SK-N-SH (cell line): ENCODE measurements at regions of chr17 and their contacts with region 1.

Region 1: GRCh38 chr17:82418001-82418986 is at the starts of genes HEXD and OGFOD3:
- DNase-seq: peak; percentile 100
- H3K4me3 ChIP-seq: peak within 1 kb of the TSS; percentile 71 to 94
- H3K27ac ChIP-seq: peak within 1 kb of the TSS; percentile 45 to 90; a peak in 3 of 4 replicates
- H3K4me1 ChIP-seq: peaks cover 0 to 3% of the 10 kb centered on the region in 2 experiments; a peak in 2 of 4 replicates
- H3K27me3 ChIP-seq: no peaks in the 10 kb centered on the region
- CTCF ChIP-seq: no peak
- EP300 ChIP-seq: no peak; a peak in 1 of 4 replicates
- RAD21 ChIP-seq: no peak
- polyA plus RNA-seq, gene HEXD: 38.8 and 43.1 TPM in 2 replicates
- polyA plus RNA-seq, gene OGFOD3: 57.1 and 68.2 TPM in 2 replicates

Region 2: GRCh38 chr17:82338858-82339633 is 79.2 kb before region 1 on chr17:
- CTCF ChIA-PET with region 1: interaction called, 13 read pairs
- POLR2A ChIA-PET with region 1: no interaction called
- DNase-seq: no peak
- H3K4me3 ChIP-seq: peak overlapping the region; percentile 29 to 30; a peak in 3 of 4 replicates
- H3K27ac ChIP-seq: peak overlapping the region; percentile 16 to 40
- H3K4me1 ChIP-seq: peaks cover 4 to 15% of the 10 kb centered on the region in 2 experiments; a peak in 2 of 4 replicates
- H3K27me3 ChIP-seq: no peaks in the 10 kb centered on the region
- CTCF ChIP-seq: no peak
- EP300 ChIP-seq: no peak; a peak in 1 of 4 replicates
- RAD21 ChIP-seq: no peak

Region 3: GRCh38 chr17:82358465-82359350 is 59.6 kb before region 1 on chr17 and contains the start of gene TEX19:
- CTCF ChIA-PET with region 1: interaction called, 124 read pairs
- POLR2A ChIA-PET with region 1: no interaction called
- DNase-seq: peak; percentile 72
- H3K4me3 ChIP-seq: no peak within 1 kb of the TSS; a peak in 1 of 4 replicates
- H3K27ac ChIP-seq: peak within 1 kb of the TSS in 1 of 2 experiments; percentile 26; a peak in 1 of 4 replicates
- H3K4me1 ChIP-seq: peaks cover 0 to 8% of the 10 kb centered on the region in 2 experiments; a peak in 1 of 4 replicates
- H3K27me3 ChIP-seq: no peaks in the 10 kb centered on the region; the same call in 1 of the 2 replicates
- CTCF ChIP-seq: peak; percentile 15; the same call in 1 of the 2 replicates
- EP300 ChIP-seq: no peak
- RAD21 ChIP-seq: peak; percentile 40
- polyA plus RNA-seq, gene TEX19: 0.10 and 0.11 TPM in 2 replicates

Region 4: DNA sequence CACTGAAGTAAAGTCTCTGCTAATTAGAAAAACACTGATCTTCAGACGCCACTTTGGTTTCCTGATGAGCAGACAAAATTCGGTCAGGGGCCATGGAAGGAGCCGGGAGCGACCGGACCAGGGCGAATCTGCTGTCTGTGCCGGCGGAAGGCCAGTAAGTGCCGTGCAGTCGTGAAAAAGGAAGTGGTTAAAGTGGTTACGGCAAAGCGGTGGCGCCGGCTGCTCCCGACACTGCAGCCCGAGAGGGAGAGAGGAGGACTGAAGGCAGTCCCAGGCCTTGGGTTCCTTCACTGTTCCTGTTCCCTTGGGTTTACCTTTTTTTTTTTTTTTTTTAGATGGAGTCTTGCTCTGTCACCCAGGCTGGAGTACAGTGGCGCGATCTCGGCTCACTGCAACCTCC is 17.5 kb before region 1 on chr17:
- CTCF ChIA-PET with region 1: interaction called, 33 read pairs
- POLR2A ChIA-PET with region 1: no interaction called
- DNase-seq: no peak
- H3K4me3 ChIP-seq: no peak overlapping the region
- H3K27ac ChIP-seq: no peak overlapping the region
- H3K4me1 ChIP-seq: peaks cover 9 to 35% of the 10 kb centered on the region in 2 experiments; a peak in 3 of 4 replicates
- H3K27me3 ChIP-seq: no peaks in the 10 kb centered on the region
- CTCF ChIP-seq: no peak
- EP300 ChIP-seq: no peak
- RAD21 ChIP-seq: no peak

Region 5: GRCh38 chr17:82429824-82430223 is 11.5 kb after region 1 on chr17:
- CTCF ChIA-PET with region 1: interaction called, 14 read pairs
- POLR2A ChIA-PET with region 1: no interaction called
- DNase-seq: no peak
- H3K4me3 ChIP-seq: no peak overlapping the region
- H3K27ac ChIP-seq: no peak overlapping the region
- H3K4me1 ChIP-seq: no peaks in the 10 kb centered on the region; a peak in 1 of 4 replicates
- H3K27me3 ChIP-seq: no peaks in the 10 kb centered on the region
- CTCF ChIP-seq: no peak
- EP300 ChIP-seq: no peak
- RAD21 ChIP-seq: no peak